ENCODE measurements at regions of chrX and their contacts with region 1.

Region 1: GRCh38 chrX:80808160-80808735 is 1.4 kb downstream of the BRWD3 start:
- DNase-seq: peak; percentile 83
- H3K4me3 Mint-ChIP-seq: peak overlapping the region; percentile 90
- H3K27ac Mint-ChIP-seq: peak overlapping the region; percentile 97
- H3K4me1 Mint-ChIP-seq: peaks cover 26% of the 10 kb centered on the region
- H3K27me3 Mint-ChIP-seq: no peaks in the 10 kb centered on the region

Region 2: GRCh38 chrX:80708781-80709180 is 99.5 kb before region 1 on chrX:
- CTCF ChIA-PET with region 1: no interaction called
- intact Hi-C with region 1: no loop called
- DNase-seq: no peak
- H3K4me3 Mint-ChIP-seq: no peak overlapping the region
- H3K27ac Mint-ChIP-seq: no peak overlapping the region
- H3K4me1 Mint-ChIP-seq: no peaks in the 10 kb centered on the region
- H3K27me3 Mint-ChIP-seq: no peaks in the 10 kb centered on the region

Region 3: GRCh38 chrX:80721185-80721584 is 87.1 kb before region 1 on chrX:
- CTCF ChIA-PET with region 1: no interaction called
- intact Hi-C with region 1: loop called (anchors 10 kb)
- DNase-seq: no peak
- H3K4me3 Mint-ChIP-seq: no peak overlapping the region
- H3K27ac Mint-ChIP-seq: no peak overlapping the region
- H3K4me1 Mint-ChIP-seq: no peaks in the 10 kb centered on the region
- H3K27me3 Mint-ChIP-seq: no peaks in the 10 kb centered on the region

Region 4: DNA sequence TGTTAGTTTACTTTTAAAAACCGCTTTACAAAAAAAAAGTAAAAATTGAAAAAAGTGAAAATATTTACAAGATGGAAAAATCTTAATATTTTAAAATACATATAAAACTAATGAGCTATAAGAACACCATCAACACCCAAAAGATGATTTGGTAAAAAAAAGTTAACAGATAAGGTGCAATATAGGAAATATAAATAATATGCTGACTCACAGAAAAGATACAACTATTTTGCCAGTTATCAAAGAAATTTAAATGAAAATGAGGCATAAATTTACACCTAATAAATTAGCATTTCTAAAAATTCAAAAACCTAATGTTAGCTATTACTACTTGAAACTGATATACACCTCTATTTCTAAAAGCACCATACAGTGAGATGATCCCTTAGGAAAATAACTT is 53.1 kb before region 1 on chrX:
- CTCF ChIA-PET with region 1: no interaction called
- intact Hi-C with region 1: loop called (anchors 5 kb)
- DNase-seq: no peak
- H3K4me3 Mint-ChIP-seq: no peak overlapping the region
- H3K27ac Mint-ChIP-seq: no peak overlapping the region
- H3K4me1 Mint-ChIP-seq: peaks cover 3% of the 10 kb centered on the region
- H3K27me3 Mint-ChIP-seq: no peaks in the 10 kb centered on the region

Region 5: GRCh38 chrX:81121513-81122382 is 313.5 kb after region 1 on chrX:
- CTCF ChIA-PET with region 1: interaction called, 4 read pairs
- intact Hi-C with region 1: loop called (anchors 1 kb)
- DNase-seq: peak; percentile 91
- H3K4me3 Mint-ChIP-seq: peak overlapping the region; percentile 91
- H3K27ac Mint-ChIP-seq: peak overlapping the region; percentile 85
- H3K4me1 Mint-ChIP-seq: peaks cover 3% of the 10 kb centered on the region
- H3K27me3 Mint-ChIP-seq: no peaks in the 10 kb centered on the region

Region 6: DNA sequence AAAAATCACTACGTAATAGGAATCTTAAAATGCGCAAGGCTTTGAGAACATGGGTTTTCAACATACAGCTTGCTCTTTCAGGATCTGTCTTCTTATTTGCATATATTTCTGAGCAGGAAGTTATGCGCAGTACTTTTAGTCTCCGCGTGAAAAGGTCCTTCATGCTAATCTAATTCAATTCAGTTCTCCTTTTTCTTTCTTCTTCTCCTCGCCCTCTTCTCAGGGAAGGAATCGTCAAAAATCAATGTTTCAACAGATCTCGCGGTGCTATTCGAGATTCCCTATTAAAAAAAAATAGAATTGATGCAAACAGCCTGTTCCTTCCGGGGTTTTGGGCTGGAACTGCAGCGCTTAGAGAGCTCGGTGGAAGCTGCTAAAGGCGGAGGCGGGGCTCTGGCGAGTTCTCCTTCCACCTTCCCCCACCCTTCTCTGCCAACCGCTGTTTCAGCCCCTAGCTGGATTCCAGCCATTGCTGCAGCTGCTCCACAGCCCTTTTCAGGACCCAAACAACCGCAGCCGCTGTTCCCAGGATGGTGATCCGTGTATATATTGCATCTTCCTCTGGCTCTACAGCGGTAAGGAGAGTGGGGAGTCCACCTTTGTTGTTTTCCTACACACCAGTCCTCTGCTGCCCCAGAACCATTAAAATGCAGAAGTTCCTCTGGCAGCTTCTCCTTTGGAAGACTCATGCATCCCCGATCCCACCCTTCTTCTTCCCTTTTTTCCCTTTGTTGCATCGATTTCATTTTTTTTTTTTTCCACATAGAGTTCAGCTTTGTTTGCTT is 393.6 kb after region 1 on chrX and contains the starts of genes HMGN5 and SH3BGRL:
- CTCF ChIA-PET with region 1: interaction called, 3 read pairs
- intact Hi-C with region 1: loop called (anchors 1 kb)
- DNase-seq: peak; percentile 81
- H3K4me3 Mint-ChIP-seq: peak within 1 kb of the TSS; percentile 98
- H3K27ac Mint-ChIP-seq: peak within 1 kb of the TSS; percentile 99
- H3K4me1 Mint-ChIP-seq: peaks cover 39% of the 10 kb centered on the region
- H3K27me3 Mint-ChIP-seq: no peaks in the 10 kb centered on the region
- total RNA-seq, gene HMGN5: 6.2 to 6.3 TPM
- total RNA-seq, gene SH3BGRL: 48.3 to 54.3 TPM